Right ventricle myocardium superior (tissue), 1 donor: ENCODE measurements at regions of chr1 and their contacts with region 1.

Region 1: DNA sequence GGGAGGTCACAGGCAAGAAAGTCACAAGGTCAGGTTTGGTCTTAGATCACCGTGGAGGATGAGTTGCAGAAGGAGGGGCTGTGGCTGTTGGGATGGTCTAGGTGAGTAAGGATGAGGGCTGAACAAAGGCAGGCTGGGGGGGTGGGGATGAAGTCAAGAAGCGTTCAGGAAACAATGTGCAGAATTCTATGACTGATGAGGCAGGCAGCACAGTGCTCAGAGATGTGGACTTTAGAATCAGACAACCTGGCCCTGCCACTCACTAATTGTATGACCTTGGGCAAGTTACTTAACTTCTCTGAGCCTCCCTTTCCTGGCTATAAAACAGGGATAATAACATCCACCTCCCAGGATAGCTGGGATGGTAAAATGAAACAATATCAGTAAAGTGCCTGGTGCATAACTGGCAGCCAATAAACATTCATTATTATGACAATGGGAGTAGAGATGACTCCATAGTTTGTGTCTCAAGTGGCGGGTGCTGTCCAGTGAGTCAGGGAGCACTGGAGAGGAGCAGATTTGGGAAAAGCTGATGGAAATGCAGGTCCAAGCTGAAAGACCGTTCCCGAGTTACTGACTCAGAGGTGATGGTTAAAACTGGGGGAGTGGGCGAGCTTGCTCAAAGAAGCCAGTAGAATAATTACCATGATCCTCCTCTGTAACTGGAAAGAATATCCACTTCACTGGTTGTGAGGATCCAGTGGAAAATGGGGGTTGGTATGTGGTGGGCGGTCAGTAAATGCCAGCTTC is 2.1 kb downstream of the TIE1 start:
- DNase-seq: peak; percentile 1
- ATAC-seq: no peak

Region 2: DNA sequence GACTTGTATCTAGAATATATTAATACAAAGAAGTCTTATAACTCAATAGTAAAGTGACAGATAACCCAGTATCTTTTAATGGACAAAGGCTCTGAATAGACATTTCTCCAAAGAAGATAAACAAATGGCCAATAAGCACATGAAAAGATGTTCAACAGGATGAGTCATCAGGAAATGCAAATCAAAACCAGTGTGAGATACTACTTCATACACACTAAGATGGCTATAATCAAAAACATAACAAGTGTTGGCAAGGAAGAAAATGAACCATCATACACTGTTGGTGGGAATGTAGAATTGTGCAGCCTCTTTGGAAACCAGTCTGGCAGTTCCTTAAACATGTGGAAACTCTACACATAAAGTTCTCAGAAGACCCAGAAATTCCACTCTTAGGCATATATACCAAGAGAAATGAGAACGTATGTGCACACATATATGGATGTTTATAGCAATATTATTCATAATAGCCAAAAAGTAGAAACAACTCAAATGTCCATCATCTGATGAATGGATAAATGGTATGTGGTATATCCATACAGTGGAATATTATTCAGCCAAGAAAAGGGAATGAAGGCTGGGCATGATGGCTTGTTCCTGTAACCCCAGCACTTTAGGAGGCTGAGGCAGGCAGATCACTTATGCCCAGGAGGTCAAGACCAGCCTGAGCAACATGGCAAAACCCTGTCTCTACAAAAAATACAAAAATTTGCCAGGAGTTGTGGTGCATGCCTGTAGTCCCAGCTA is 24.8 kb after region 1 on chr1:
- intact Hi-C with region 1: loop called (anchors 2 kb)
- DNase-seq: no peak
- ATAC-seq: no peak

Region 3: DNA sequence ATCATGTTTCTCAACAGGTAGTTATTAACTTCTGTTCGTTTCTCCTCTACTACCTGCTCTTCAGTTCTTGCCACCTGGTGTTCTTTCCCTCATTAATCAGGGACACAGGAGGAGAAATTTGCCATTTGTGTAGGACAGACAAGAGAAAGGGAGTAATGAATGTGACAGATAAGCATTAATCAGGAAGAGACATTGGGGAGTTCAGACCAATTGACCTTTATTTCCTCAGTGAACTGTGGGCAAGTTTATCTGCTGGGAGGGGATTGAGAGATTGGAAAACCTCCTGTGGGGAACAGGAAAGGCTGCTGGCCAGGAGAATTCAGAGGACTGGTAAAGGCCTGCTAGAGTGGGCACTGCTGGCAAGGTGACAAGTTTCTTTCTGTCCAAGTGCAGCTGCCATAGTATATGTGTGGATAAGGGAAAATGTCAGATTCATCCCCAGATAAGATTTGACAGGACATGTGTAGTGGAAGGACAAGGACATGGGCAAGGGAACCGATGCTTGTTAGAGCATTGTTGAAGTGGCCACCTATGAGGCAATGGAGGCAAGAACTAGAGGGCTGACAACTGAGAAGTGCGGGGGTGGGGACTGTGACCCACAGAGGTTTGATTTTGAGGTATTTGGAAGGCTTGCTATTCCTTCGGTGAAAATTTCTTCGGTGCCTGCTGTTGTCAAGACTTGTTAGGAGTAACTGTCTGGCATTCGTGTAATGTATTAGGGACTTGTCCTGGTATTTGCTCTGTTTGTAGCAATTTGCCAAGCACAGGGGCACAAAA is 99.4 kb after region 1 on chr1:
- intact Hi-C with region 1: no loop called
- DNase-seq: no peak
- ATAC-seq: no peak